ENCODE measurements at regions of chr6 and their contacts with region 1.

Region 1: GRCh38 chr6:22653980-22654610 is 84.7 kb downstream of the HDGFL1 start:
- DNase-seq: peak in 1 of 42 donors; percentile 32

Region 2: DNA sequence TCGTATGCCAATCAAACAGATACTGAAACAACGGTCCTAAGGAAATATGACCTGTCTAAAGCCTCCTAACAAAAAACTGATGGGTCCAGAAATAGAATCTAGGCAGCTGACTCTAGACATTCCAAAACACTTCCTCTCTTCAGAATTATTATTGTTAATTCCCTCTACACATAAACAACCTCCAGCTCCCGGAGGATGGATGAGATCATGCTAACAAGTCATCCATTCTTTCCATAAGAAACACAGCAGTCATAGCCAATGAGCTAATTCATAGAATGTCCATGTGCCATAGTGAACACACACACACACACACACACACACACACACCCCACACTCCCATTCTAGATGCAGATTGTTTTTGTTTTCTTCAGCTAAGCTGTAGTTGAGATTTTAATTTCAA is 40.4 kb before region 1 on chr6:
- intact Hi-C with region 1: no loop called
- DNase-seq: peak in 1 of 42 donors; percentile 11

Region 3: DNA sequence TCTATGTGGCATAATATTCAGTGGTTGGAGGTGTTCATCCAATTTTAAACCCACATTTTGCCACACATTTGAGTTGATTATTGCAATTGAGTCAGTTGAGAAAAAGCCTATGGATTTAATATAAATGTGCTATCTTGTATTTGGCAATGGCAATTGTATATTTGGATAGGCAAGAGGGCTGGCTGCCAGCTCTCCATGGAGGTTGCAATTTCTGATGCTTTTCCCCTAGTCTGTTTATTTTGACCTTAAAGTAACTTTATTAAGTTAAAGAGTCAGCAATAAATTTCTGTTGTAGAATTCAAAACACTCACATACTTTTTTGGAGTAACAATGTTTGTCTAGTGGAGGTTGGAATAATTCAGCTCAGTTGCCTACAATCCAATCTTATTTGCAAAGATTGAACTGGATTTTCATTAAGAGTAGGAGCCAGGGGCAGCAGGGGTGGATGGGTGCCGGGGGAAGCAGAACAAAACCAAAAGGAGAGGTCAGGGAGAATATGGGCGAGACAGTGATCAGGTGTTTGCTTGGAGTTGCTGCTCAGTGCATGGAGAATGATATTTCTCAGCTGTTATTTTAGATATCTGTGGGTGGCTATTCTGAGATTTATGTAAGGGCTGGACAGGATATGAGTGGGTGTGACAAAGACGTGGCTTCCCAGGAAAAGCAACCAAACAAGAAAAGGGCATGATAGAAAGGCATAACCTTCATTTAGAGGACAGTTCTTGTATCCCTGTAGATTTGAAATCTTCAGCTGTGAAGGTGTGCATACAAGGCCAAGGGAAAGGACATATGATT is 78.3 kb after region 1 on chr6:
- intact Hi-C with region 1: loop called (anchors 5 kb)
- DNase-seq: no peak

Region 4: GRCh38 chr6:22747571-22747970 is 93.5 kb after region 1 on chr6:
- intact Hi-C with region 1: no loop called
- DNase-seq: no peak